ENCODE measurements at regions of chr12 and their contacts with region 1.

Region 1: GRCh38 chr12:76020731-76021672 is 10.6 kb downstream of the PHLDA1 start:
- DNase-seq: peak; percentile 67
- H3K4me3 Mint-ChIP-seq: peak overlapping the region; percentile 66
- H3K27ac Mint-ChIP-seq: peak overlapping the region; percentile 99
- H3K4me1 Mint-ChIP-seq: peaks cover 60% of the 10 kb centered on the region
- H3K27me3 Mint-ChIP-seq: no peaks in the 10 kb centered on the region

Region 2: GRCh38 chr12:75635606-75636410 is 385.2 kb before region 1 on chr12:
- intact Hi-C with region 1: loop called (anchors 1 kb)
- DNase-seq: no peak
- H3K4me3 Mint-ChIP-seq: no peak overlapping the region
- H3K27ac Mint-ChIP-seq: peak overlapping the region; percentile 54
- H3K4me1 Mint-ChIP-seq: peaks cover 38% of the 10 kb centered on the region
- H3K27me3 Mint-ChIP-seq: peaks cover 3% of the 10 kb centered on the region

Region 3: GRCh38 chr12:75658901-75659383 is 362.1 kb before region 1 on chr12:
- intact Hi-C with region 1: loop called (anchors 5 kb)
- DNase-seq: peak; percentile 9
- H3K4me3 Mint-ChIP-seq: no peak overlapping the region
- H3K27ac Mint-ChIP-seq: peak overlapping the region; percentile 5
- H3K4me1 Mint-ChIP-seq: peaks cover 34% of the 10 kb centered on the region
- H3K27me3 Mint-ChIP-seq: peaks cover 6% of the 10 kb centered on the region

Region 4: GRCh38 chr12:75944097-75944904 is 76.7 kb before region 1 on chr12:
- intact Hi-C with region 1: loop called (anchors 1 kb)
- DNase-seq: no peak
- H3K4me3 Mint-ChIP-seq: peak overlapping the region; percentile 52
- H3K27ac Mint-ChIP-seq: peak overlapping the region; percentile 97
- H3K4me1 Mint-ChIP-seq: peaks cover 32% of the 10 kb centered on the region
- H3K27me3 Mint-ChIP-seq: no peaks in the 10 kb centered on the region

Region 5: DNA sequence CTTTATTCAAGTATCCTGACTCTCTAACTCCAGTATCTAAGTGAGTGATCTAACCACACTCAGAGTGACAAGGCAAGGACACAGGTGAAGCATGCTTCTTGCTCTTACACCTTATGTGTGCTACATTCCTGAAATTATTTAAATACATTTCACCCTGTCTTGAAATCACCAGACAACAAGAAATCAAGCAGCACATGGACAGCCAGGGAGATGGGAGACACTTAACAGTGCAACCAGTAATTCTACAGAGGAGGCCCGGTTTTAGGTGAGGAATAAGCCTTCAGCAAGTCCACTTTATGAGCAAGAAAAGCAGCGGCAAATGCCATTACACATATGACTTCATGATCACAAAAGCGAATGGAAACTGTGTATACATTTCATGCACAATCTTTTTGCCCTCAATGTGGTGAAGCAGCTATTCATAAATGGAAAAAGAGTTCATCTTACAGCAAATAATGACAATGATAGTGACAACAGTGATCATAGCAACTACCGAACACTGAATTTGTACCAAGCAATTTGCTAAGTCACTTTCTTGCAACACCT is 26.7 kb before region 1 on chr12:
- intact Hi-C with region 1: loop called (anchors 1 kb)
- DNase-seq: no peak
- H3K4me3 Mint-ChIP-seq: no peak overlapping the region
- H3K27ac Mint-ChIP-seq: peak overlapping the region; percentile 79
- H3K4me1 Mint-ChIP-seq: peaks cover 56% of the 10 kb centered on the region
- H3K27me3 Mint-ChIP-seq: no peaks in the 10 kb centered on the region

Region 6: DNA sequence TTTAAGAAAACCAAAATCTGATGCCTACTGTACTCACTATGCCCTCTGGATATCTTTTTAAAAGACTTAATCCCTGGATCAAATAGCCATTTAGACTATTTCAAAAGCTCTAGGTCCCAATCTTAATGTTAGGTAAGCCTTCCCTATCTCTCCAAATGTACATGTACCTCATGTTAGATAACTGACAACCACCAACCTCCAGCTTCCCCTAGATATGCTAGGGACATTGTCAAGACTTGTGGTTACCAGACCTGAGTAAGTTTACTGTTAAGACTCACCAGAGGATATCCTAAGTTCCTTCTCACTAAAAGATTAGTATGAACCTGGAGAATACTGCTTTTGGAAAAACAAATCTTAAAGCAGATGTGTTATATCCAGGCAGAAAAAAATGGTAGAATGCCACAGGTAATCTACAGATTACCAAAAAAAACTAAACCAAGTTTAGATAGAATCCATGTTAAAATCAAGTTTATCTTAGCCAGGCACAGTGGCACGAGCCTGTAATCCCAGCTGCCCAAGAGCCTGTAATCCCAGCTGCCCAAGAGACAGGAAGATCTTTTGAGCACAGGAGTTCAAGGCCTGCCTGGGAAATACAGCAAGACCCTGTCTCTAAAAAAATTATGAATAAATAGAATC is 53.8 kb after region 1 on chr12:
- intact Hi-C with region 1: no loop called
- DNase-seq: no peak
- H3K4me3 Mint-ChIP-seq: no peak overlapping the region
- H3K27ac Mint-ChIP-seq: no peak overlapping the region
- H3K4me1 Mint-ChIP-seq: peaks cover 46% of the 10 kb centered on the region
- H3K27me3 Mint-ChIP-seq: no peaks in the 10 kb centered on the region